Esophagus squamous epithelium (tissue), 5 donors: ENCODE measurements at regions of chr1 and their contacts with region 1.

Region 1: DNA sequence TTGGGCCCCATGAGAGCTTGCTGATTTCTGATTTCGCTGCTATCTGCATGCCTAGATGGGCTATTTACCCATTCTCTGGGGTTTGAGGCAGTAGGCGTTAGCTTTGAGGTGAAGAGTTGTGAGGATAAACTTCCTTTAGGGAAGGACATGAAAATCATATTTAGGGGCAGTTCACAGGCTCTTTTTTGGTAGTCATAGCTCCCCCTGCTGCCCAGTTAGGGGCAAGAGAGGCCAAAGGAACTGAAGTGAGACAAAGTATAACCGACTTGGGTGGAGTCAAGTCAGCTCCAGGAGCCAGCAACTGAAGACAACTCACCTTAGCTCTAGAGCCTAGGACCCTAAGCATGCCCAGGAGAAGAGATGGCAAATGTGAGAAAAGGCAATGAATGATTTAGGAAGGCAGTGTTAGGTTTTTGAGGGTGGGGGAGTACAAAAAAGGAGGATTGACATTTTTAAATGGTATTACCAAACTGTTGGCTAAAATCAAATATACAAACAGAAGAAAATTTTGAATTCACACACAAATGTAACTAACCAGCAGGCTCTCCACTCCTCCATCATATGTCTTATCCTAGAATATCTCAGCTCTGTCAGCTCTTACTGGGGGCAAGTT is 625.2 kb downstream of the LMO4 start:
- DNase-seq: no peak
- H3K4me3 ChIP-seq: no peak overlapping the region
- H3K27ac ChIP-seq: no peak overlapping the region
- H3K4me1 ChIP-seq: peaks cover 0 to 6% (median 0%) of the 10 kb centered on the region in 3 donors
- H3K27me3 ChIP-seq: no peaks in the 10 kb centered on the region
- CTCF ChIP-seq: peak; percentile 21 to 79 (median 66)
- POLR2A ChIP-seq: no peak

Region 2: DNA sequence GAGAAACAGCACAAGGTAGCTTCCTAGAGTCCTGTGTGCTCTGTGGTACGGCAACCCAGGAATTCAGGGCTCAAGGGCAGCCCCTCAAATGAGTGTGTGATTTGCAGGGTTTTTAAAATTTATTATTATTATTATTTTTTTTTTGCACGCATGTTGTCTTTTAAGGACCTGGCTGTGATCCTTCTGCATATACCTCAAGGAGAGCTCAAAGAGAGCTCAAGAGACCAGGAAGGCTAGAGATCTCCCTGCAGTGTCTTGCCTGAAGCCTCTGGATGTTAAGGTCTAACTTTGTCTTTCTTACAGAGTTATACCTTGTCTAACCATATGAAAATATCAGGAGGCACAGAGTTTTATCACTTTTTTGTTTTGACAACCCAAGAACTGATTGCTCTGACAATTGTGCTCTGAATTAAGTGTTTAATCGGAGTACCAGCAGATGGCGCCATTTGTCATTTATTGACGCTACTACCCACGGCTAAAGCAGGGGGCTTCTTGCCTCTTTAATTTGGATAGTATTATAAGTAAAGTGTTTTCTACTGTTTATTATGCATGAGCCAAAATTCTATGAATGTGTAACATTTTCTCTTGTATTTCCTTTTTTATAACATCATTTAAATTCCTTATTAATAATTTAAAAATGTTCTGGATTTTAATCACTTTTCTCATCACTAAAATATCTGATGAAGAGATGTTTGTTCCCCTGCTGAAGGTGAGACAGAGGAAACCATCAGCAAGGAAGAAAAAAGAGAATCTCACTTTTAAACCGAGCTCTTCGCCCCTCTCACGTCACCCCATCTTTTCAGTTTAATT is 660.9 kb before region 1 on chr1:
- intact Hi-C with region 1: loop called (anchors 10 kb)
- DNase-seq: no peak
- H3K4me3 ChIP-seq: no peak overlapping the region
- H3K27ac ChIP-seq: no peak overlapping the region
- H3K4me1 ChIP-seq: no peaks in the 10 kb centered on the region
- H3K27me3 ChIP-seq: no peaks in the 10 kb centered on the region
- CTCF ChIP-seq: peak; percentile 64 to 79 (median 75)
- POLR2A ChIP-seq: no peak

Region 3: DNA sequence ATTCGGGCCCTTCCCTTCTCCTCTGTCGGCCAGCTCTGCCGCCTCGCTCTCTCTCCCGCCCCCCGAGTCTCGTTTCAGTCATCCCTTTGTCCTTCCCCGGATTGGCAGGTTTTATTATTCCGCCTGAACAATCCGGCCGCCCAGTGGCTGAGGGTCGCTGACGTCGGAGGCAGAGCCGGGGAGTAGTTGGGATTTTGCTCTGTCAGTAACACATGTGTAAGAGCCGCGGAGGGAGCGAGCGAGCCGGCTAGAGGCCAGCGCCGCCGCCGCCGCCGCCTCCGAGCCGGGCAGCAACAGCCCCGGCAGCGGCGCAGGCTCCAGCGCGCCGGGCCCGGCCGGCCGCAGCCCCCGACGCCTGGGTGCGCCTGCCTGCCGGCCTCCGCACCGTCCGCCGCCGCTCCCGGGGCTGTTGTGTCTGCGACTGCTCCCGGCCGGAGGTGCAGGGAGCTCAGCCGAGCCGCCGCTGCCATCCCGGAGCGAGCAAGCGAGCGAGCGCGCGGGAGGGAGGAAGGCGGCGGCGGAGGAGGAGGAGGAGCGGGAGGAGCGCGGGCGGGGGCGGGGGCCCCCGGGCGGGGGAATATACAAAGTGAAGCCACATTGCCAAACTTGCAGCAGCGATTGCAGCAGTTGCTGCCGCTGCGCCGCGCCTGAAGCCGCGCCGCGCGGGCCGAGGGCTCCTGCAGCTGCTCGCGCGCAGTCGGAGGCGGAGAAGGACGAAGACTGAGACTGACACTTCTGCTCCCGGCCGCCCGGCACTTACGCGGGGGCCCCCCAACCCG is 625.4 kb before region 1 on chr1 and contains the start of gene LMO4:
- intact Hi-C with region 1: loop called (anchors 10 kb)
- DNase-seq: peak; percentile 86
- H3K4me3 ChIP-seq: peak within 1 kb of the TSS; percentile 88 to 99 (median 92)
- H3K27ac ChIP-seq: peak within 1 kb of the TSS; percentile 97 to 100 (median 98)
- H3K4me1 ChIP-seq: peaks cover 7 to 39% (median 7%) of the 10 kb centered on the region in 3 donors
- H3K27me3 ChIP-seq: no peaks in the 10 kb centered on the region
- CTCF ChIP-seq: peak in 2 of 6 experiments; percentile 26 to 48
- POLR2A ChIP-seq: peak in 3 of 4 donors; percentile 87 to 96 (median 88)
- total RNA-seq, gene LMO4: 32.7 to 57.3 (median 52.1) TPM

Region 4: DNA sequence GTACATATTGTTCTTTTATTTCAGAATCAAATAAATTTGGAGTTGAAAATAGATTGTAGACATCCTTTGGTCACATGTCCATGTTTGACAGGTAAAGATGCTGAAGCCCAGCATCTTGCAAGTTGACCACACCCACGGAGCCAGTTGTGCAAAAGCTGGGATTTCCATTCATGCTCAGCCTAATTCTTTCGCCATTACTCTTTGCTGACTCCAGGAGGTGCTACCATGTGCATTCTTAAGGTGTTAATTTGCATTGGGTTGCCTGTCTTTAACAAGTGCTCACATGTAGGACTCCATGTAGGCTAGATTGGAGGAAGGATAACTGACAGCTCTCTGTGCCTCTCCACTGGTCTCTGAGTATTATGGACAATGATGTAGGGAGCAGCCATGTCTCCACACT is 35.5 kb after region 1 on chr1:
- intact Hi-C with region 1: no loop called
- DNase-seq: no peak
- H3K4me3 ChIP-seq: no peak overlapping the region
- H3K27ac ChIP-seq: no peak overlapping the region
- H3K4me1 ChIP-seq: no peaks in the 10 kb centered on the region
- H3K27me3 ChIP-seq: no peaks in the 10 kb centered on the region
- CTCF ChIP-seq: peak in 1 of 6 experiments; percentile 26
- POLR2A ChIP-seq: no peak